Colonic mucosa (tissue), 4 donors: ENCODE measurements at regions of chr3 and their contacts with region 1.

Region 1: DNA sequence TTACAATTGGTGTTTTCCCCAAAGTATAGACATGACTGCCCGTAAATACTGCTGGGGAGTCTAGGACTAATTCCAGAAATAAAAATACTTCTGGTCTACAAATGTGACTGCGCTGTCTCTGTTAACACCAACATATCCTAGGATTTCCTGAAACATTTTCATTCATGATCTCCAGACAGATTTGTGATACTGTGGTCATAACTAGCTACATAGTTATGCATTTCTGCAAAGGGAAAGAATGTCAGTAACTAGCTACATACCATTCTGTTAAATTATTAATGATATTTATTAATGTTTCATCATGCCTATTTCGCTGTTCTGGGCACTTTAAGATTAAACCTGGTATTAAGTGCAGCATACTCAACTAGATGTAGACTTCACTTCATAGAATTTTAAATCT is 33.3 kb downstream of the SETD5 start:
- DNase-seq: no peak
- H3K4me3 ChIP-seq: no peak overlapping the region
- H3K27ac ChIP-seq: no peak overlapping the region
- H3K4me1 ChIP-seq: no peaks in the 10 kb centered on the region
- H3K27me3 ChIP-seq: no peaks in the 10 kb centered on the region
- CTCF ChIP-seq: no peak

Region 2: DNA sequence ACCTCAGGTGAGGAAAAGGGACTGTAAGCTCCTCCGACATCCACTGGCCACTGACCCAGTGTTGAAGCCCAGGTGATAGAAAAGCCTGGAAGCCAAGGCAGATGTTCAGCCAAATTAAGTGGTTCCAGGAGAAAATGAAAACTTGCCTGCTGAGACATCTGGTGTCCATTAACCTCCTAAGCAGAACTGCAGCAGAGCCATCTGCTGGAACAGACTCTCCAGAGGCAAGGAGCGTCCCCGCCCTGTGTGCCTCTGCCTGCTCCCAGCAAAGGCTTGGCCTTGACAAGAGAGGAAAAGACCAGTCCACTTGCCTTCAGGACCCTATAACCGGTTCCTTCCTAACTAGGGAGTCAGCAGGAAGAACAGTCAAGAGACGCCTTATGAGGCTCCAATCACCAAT is 229.5 kb before region 1 on chr3:
- intact Hi-C with region 1: no loop called
- DNase-seq: no peak
- H3K4me3 ChIP-seq: no peak overlapping the region
- H3K27ac ChIP-seq: no peak overlapping the region
- H3K4me1 ChIP-seq: no peaks in the 10 kb centered on the region
- H3K27me3 ChIP-seq: no peaks in the 10 kb centered on the region
- CTCF ChIP-seq: no peak

Region 3: GRCh38 chr3:9468460-9468859 is 37.7 kb after region 1 on chr3:
- intact Hi-C with region 1: loop called (anchors 5 kb)
- DNase-seq: no peak
- H3K4me3 ChIP-seq: no peak overlapping the region
- H3K27ac ChIP-seq: no peak overlapping the region
- H3K4me1 ChIP-seq: no peaks in the 10 kb centered on the region
- H3K27me3 ChIP-seq: no peaks in the 10 kb centered on the region
- CTCF ChIP-seq: no peak